ENCODE measurements at regions of chr11 and their contacts with region 1.

Region 1: GRCh38 chr11:46238967-46239800 is 38.3 kb upstream of the CREB3L1 start:
- DNase-seq: peak; percentile 86
- ATAC-seq: peak; percentile 78
- H3K4me3 Mint-ChIP-seq: peak overlapping the region; percentile 64
- H3K27ac Mint-ChIP-seq: peak overlapping the region; percentile 55
- H3K4me1 Mint-ChIP-seq: peaks cover 41% of the 10 kb centered on the region
- H3K27me3 Mint-ChIP-seq: peaks cover 17% of the 10 kb centered on the region

Region 2: GRCh38 chr11:46216019-46216764 is 23.0 kb before region 1 on chr11:
- CTCF ChIA-PET with region 1: interaction called, 11 read pairs
- DNase-seq: no peak
- ATAC-seq: no peak
- H3K4me3 Mint-ChIP-seq: no peak overlapping the region
- H3K27ac Mint-ChIP-seq: no peak overlapping the region
- H3K4me1 Mint-ChIP-seq: peaks cover 8% of the 10 kb centered on the region
- H3K27me3 Mint-ChIP-seq: peaks cover 4% of the 10 kb centered on the region

Region 3: GRCh38 chr11:46265764-46266163 is 26.6 kb after region 1 on chr11:
- CTCF ChIA-PET with region 1: no interaction called
- DNase-seq: no peak
- ATAC-seq: no peak
- H3K4me3 Mint-ChIP-seq: no peak overlapping the region
- H3K27ac Mint-ChIP-seq: no peak overlapping the region
- H3K4me1 Mint-ChIP-seq: no peaks in the 10 kb centered on the region
- H3K27me3 Mint-ChIP-seq: peaks cover 10% of the 10 kb centered on the region

Region 4: DNA sequence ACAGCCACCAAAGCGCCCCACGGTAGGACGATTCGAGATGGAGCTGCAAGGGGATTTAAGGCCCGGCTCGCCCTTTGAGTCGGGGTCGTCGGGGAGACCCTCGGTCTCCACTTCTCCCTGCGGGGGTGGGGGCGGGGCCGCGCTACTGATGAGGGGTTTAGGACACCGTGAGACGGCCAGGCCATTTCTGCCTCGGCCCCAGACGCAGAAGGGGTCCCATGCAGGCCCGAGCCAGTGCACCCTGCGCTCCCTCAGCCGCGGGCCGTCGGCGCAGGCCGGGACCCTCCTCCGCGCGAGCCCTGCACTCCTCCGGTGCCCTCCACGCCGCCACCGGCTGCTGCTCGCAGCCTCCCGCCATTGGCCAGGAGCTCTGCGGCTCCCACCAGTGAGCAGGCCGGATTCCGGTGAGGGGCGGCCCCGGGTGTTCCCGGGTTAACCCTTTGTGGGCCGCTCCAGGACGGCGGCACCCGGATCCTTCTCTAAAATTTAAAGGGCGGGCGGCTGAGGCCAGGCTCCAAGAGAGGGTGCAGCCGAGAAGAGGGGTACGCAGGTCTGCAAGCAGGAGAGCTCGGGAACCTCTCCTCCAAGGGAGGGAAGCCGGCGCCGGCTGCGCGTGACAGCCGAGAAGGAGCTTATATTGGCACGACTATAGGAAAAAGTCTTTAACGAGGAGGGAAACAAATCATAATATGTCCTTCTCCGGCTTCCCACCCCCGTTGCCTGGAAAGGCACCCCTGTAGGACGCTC is 56.3 kb after region 1 on chr11:
- CTCF ChIA-PET with region 1: interaction called, 28 read pairs
- DNase-seq: peak; percentile 74
- ATAC-seq: peak; percentile 98
- H3K4me3 Mint-ChIP-seq: peak overlapping the region; percentile 51
- H3K27ac Mint-ChIP-seq: no peak overlapping the region
- H3K4me1 Mint-ChIP-seq: peaks cover 21% of the 10 kb centered on the region
- H3K27me3 Mint-ChIP-seq: peaks cover 40% of the 10 kb centered on the region

Region 5: DNA sequence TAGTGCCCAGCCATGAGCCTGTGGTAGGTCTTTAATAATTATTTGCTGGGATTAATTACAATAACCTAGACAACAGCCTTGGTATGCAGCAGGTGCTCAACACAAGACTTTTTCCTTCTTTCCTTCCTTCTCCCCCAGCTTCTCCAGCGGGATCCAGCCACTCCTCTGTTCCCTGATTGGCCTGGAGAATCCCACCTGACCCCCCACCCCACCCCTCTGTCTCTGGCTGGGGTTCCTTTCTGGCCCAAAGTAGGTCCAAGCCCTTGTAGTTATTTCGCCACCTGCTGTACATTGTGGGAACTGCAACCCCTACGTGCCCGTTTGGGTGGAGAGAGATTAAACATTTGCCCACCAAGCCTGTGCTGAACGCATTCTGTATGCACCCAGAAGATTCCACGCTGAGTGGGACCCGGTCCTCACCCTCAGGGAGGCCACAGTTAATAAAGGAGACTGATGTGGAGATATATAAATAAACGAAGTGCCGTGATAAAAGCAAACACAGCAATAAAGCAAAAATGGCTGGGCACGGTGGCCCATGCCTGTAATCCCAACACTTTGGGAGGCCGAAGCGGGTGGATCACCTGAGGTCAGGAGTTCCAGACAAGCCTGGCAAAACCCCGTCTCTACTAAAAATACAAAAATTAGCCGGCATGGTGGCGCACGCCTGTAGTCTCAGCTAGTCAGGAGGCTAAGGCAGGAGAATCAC is 76.0 kb after region 1 on chr11:
- CTCF ChIA-PET with region 1: interaction called, 189 read pairs
- DNase-seq: peak; percentile 82
- ATAC-seq: peak; percentile 73
- H3K4me3 Mint-ChIP-seq: no peak overlapping the region
- H3K27ac Mint-ChIP-seq: no peak overlapping the region
- H3K4me1 Mint-ChIP-seq: peaks cover 21% of the 10 kb centered on the region
- H3K27me3 Mint-ChIP-seq: peaks cover 2% of the 10 kb centered on the region

Region 6: GRCh38 chr11:46352063-46352841 is 113.1 kb after region 1 on chr11:
- CTCF ChIA-PET with region 1: interaction called, 21 read pairs
- DNase-seq: peak; percentile 79
- ATAC-seq: peak; percentile 26
- H3K4me3 Mint-ChIP-seq: peak overlapping the region; percentile 71
- H3K27ac Mint-ChIP-seq: peak overlapping the region; percentile 59
- H3K4me1 Mint-ChIP-seq: peaks cover 68% of the 10 kb centered on the region
- H3K27me3 Mint-ChIP-seq: no peaks in the 10 kb centered on the region